A673 (cell line): ENCODE measurements at regions of chr5 and their contacts with region 1.

Region 1: GRCh38 chr5:147576646-147577535 is 67.0 kb upstream of the DPYSL3 start:
- DNase-seq: peak; percentile 58
- H3K4me3 ChIP-seq: no peak overlapping the region
- H3K27ac ChIP-seq: no peak overlapping the region
- H3K4me1 ChIP-seq: peaks cover 7% of the 10 kb centered on the region
- H3K27me3 ChIP-seq: no peaks in the 10 kb centered on the region
- CTCF ChIP-seq: peak; percentile 94

Region 2: DNA sequence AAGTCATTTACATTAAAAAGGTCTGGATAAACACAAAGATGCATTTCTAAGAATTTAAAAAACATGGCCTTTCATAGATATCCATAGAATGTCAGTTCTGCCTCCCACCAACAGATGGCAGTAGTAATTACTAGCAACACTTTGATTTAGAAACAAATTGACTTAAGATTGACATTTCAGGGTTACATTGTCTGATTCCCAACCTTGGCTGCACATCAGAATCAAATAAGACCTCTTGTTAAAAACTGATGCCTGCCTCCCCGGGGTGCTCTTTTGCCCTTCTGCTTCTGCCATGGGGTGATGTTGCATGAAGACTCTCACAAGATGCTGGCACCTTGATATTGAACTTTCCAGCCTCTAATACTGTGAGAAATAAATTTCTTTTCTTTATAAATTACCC is 914.7 kb before region 1 on chr5:
- CTCF ChIA-PET with region 1: no interaction called
- POLR2A ChIA-PET with region 1: no interaction called
- intact Hi-C with region 1: loop called (anchors 10 kb)
- DNase-seq: peak; percentile 43
- H3K4me3 ChIP-seq: no peak overlapping the region
- H3K27ac ChIP-seq: no peak overlapping the region
- H3K4me1 ChIP-seq: no peaks in the 10 kb centered on the region
- H3K27me3 ChIP-seq: peaks cover 33% of the 10 kb centered on the region
- CTCF ChIP-seq: peak; percentile 69

Region 3: GRCh38 chr5:147223948-147224791 is 352.7 kb before region 1 on chr5:
- CTCF ChIA-PET with region 1: interaction called, 7 read pairs
- POLR2A ChIA-PET with region 1: no interaction called
- intact Hi-C with region 1: loop called (anchors 5 kb)
- DNase-seq: peak; percentile 52
- H3K4me3 ChIP-seq: no peak overlapping the region
- H3K27ac ChIP-seq: no peak overlapping the region
- H3K4me1 ChIP-seq: no peaks in the 10 kb centered on the region
- H3K27me3 ChIP-seq: peaks cover 34% of the 10 kb centered on the region
- CTCF ChIP-seq: peak; percentile 57

Region 4: GRCh38 chr5:147245381-147246165 is 331.3 kb before region 1 on chr5:
- CTCF ChIA-PET with region 1: no interaction called
- POLR2A ChIA-PET with region 1: no interaction called
- intact Hi-C with region 1: no loop called
- DNase-seq: no peak
- H3K4me3 ChIP-seq: no peak overlapping the region
- H3K27ac ChIP-seq: no peak overlapping the region
- H3K4me1 ChIP-seq: no peaks in the 10 kb centered on the region
- H3K27me3 ChIP-seq: peaks cover 38% of the 10 kb centered on the region
- CTCF ChIP-seq: no peak

Region 5: DNA sequence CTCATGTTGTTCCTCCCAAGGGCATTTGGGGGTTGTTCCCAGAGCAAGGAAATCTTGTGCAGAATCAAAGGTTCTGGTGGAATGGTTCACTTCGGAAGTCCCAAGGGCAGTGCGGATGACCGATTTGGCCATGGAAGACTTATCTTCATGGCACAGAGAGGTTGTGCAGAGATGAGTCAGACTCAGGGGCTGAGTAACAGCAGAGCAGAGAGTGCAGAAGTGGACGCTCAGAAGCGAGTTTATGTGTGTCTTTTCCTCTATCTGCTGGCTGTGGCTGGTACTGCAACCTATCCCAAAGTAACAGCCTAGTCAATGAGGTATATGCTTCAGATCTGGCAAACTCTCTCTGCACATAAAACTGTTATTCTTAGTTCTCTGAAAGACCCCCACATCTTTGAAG is 185.1 kb before region 1 on chr5:
- CTCF ChIA-PET with region 1: interaction called, 4 read pairs
- POLR2A ChIA-PET with region 1: no interaction called
- intact Hi-C with region 1: loop called (anchors 5 kb)
- DNase-seq: peak; percentile 50
- H3K4me3 ChIP-seq: no peak overlapping the region
- H3K27ac ChIP-seq: no peak overlapping the region
- H3K4me1 ChIP-seq: no peaks in the 10 kb centered on the region
- H3K27me3 ChIP-seq: no peaks in the 10 kb centered on the region
- CTCF ChIP-seq: peak; percentile 54

Region 6: GRCh38 chr5:147453875-147454814 is 122.7 kb before region 1 on chr5:
- CTCF ChIA-PET with region 1: interaction called, 19 read pairs
- POLR2A ChIA-PET with region 1: no interaction called
- intact Hi-C with region 1: loop called (anchors 1 kb)
- DNase-seq: peak; percentile 94
- H3K4me3 ChIP-seq: peak overlapping the region; percentile 77
- H3K27ac ChIP-seq: peak overlapping the region; percentile 76
- H3K4me1 ChIP-seq: peaks cover 20% of the 10 kb centered on the region
- H3K27me3 ChIP-seq: no peaks in the 10 kb centered on the region
- CTCF ChIP-seq: peak; percentile 99

Region 7: GRCh38 chr5:147464211-147464610 is 112.7 kb before region 1 on chr5:
- CTCF ChIA-PET with region 1: interaction called, 11 read pairs
- POLR2A ChIA-PET with region 1: no interaction called
- intact Hi-C with region 1: no loop called
- DNase-seq: peak; percentile 69
- H3K4me3 ChIP-seq: no peak overlapping the region
- H3K27ac ChIP-seq: no peak overlapping the region
- H3K4me1 ChIP-seq: no peaks in the 10 kb centered on the region
- H3K27me3 ChIP-seq: no peaks in the 10 kb centered on the region
- CTCF ChIP-seq: peak; percentile 77

Region 8: DNA sequence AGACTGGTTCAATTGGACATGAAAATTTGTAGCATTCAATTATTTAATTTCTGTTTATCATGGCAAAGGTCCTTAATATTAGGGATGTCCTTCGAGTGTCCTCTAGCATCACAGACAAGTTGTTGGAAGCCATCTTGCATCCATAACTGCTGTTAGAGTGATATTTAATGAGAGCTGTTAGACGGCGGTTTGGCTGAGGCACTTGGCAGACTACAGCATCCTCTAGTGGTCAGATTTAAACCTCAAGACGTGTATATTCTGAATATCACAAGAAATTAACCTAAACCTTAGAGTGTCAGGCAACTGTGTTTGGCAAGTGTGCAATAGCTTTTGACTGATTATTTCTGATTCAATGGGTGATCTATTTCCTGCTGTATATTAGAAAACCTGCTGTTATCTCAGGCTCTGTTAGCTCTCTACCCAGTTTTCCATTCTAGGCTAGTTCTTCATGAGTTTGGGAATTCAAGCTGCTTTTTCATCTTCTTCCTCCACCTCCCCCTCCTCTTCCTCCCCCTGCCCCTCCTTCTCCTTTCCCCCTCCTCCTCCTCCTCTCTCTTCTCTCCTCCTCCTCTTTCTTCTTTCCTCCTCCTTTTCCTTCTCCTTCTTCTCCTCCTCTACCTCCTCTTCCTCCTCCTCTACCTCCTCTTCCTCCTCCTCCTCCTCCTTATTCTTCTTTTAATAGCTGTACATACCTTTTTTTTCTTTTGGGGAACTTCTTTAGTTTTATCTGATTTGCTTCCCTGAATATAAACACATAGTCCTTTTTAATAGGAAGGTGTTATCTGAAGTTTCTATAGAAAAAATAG is 246.0 kb after region 1 on chr5:
- CTCF ChIA-PET with region 1: interaction called, 7 read pairs
- POLR2A ChIA-PET with region 1: no interaction called
- intact Hi-C with region 1: loop called (anchors 5 kb)
- DNase-seq: peak; percentile 95
- H3K4me3 ChIP-seq: no peak overlapping the region
- H3K27ac ChIP-seq: peak overlapping the region; percentile 55
- H3K4me1 ChIP-seq: peaks cover 53% of the 10 kb centered on the region
- H3K27me3 ChIP-seq: no peaks in the 10 kb centered on the region
- CTCF ChIP-seq: peak; percentile 96